Activated CD4-positive, alpha-beta T cell treated with anti-CD3 and anti-CD28 coated beads, Interleukin-2, amount 10 ng/mL, durations not matched to agents 24 days and 14 days (primary cell): ENCODE measurements at regions of chr12 and their contacts with region 1.

Region 1: GRCh38 chr12:23540572-23540971 is 408.9 kb downstream of the SOX5 start:
- DNase-seq: no peak
- H3K4me3 Mint-ChIP-seq: no peak overlapping the region
- H3K27ac Mint-ChIP-seq: no peak overlapping the region
- H3K4me1 Mint-ChIP-seq: no peaks in the 10 kb centered on the region
- H3K27me3 Mint-ChIP-seq: no peaks in the 10 kb centered on the region

Region 2: GRCh38 chr12:23484238-23484637 is 56.3 kb before region 1 on chr12:
- intact Hi-C with region 1: loop called (anchors 2 kb)
- DNase-seq: no peak
- H3K4me3 Mint-ChIP-seq: no peak overlapping the region
- H3K27ac Mint-ChIP-seq: no peak overlapping the region
- H3K4me1 Mint-ChIP-seq: no peaks in the 10 kb centered on the region
- H3K27me3 Mint-ChIP-seq: no peaks in the 10 kb centered on the region

Region 3: GRCh38 chr12:23585782-23586163 is 45.2 kb after region 1 on chr12:
- intact Hi-C with region 1: no loop called
- DNase-seq: no peak
- H3K4me3 Mint-ChIP-seq: no peak overlapping the region
- H3K27ac Mint-ChIP-seq: no peak overlapping the region
- H3K4me1 Mint-ChIP-seq: no peaks in the 10 kb centered on the region
- H3K27me3 Mint-ChIP-seq: no peaks in the 10 kb centered on the region